ENCODE measurements at regions of chr19 and their contacts with region 1.

Region 1: GRCh38 chr19:36054119-36054732 is at the start of gene THAP8:
- DNase-seq: peak; percentile 96 to 100 (median 100)
- ATAC-seq: peak; percentile 91
- H3K4me3 ChIP-seq: peak within 1 kb of the TSS; percentile 84
- H3K4me3 Mint-ChIP-seq: peak within 1 kb of the TSS; percentile 91 to 100 (median 99)
- H3K27ac ChIP-seq: peak within 1 kb of the TSS; percentile 83
- H3K27ac Mint-ChIP-seq: peak within 1 kb of the TSS; percentile 94 to 100 (median 98)
- H3K4me1 ChIP-seq: peaks cover 8 to 10% of the 10 kb centered on the region in 2 donors
- H3K4me1 Mint-ChIP-seq: peaks cover 6 to 43% (median 34%) of the 10 kb centered on the region in 7 donors
- H3K27me3 ChIP-seq: no peaks in the 10 kb centered on the region
- H3K27me3 Mint-ChIP-seq: no peaks in the 10 kb centered on the region
- total RNA-seq, gene THAP8: 2.2 to 6.6 (median 6.1) TPM

Region 2: GRCh38 chr19:35716801-35717666 is 337.2 kb before region 1 on chr19:
- CTCF ChIA-PET with region 1: no interaction called
- POLR2A ChIA-PET with region 1: interaction called, 4 read pairs
- intact Hi-C with region 1: loop called (anchors 1 kb)
- DNase-seq: peak; percentile 64 to 99 (median 98)
- ATAC-seq: peak; percentile 92
- H3K4me3 ChIP-seq: peak overlapping the region; percentile 84
- H3K4me3 Mint-ChIP-seq: peak overlapping the region; percentile 88 to 99 (median 96)
- H3K27ac ChIP-seq: peak overlapping the region; percentile 80
- H3K27ac Mint-ChIP-seq: peak overlapping the region; percentile 22 to 98 (median 92)
- H3K4me1 ChIP-seq: peaks cover 37 to 54% of the 10 kb centered on the region in 2 donors
- H3K4me1 Mint-ChIP-seq: peaks cover 40 to 63% (median 57%) of the 10 kb centered on the region in 7 donors
- H3K27me3 ChIP-seq: no peaks in the 10 kb centered on the region
- H3K27me3 Mint-ChIP-seq: no peaks in the 10 kb centered on the region

Region 3: GRCh38 chr19:35882114-35882832 is 172.0 kb before region 1 on chr19:
- CTCF ChIA-PET with region 1: no interaction called
- POLR2A ChIA-PET with region 1: no interaction called
- intact Hi-C with region 1: loop called in 1 of 2 experiments (anchors 5 kb)
- DNase-seq: peak in 7 of 9 donors; percentile 53 to 75 (median 71)
- ATAC-seq: peak; percentile 66
- H3K4me3 ChIP-seq: no peak overlapping the region
- H3K4me3 Mint-ChIP-seq: no peak overlapping the region
- H3K27ac ChIP-seq: no peak overlapping the region
- H3K27ac Mint-ChIP-seq: peak overlapping the region in 4 of 9 donors; percentile 42 to 55 (median 50)
- H3K4me1 ChIP-seq: peaks cover 4 to 9% of the 10 kb centered on the region in 2 donors
- H3K4me1 Mint-ChIP-seq: peaks cover 8 to 17% (median 11%) of the 10 kb centered on the region in 7 donors
- H3K27me3 ChIP-seq: peaks cover 4 to 6% of the 10 kb centered on the region in 2 donors
- H3K27me3 Mint-ChIP-seq: peaks cover 12 to 20% (median 18%) of the 10 kb centered on the region in 5 donors

Region 4: GRCh38 chr19:35949131-35949530 is 105.1 kb before region 1 on chr19:
- CTCF ChIA-PET with region 1: interaction called, 4 read pairs
- POLR2A ChIA-PET with region 1: interaction called, 3 read pairs
- intact Hi-C with region 1: loop called in 1 of 2 experiments (anchors 1 kb)
- DNase-seq: no peak
- ATAC-seq: no peak
- H3K4me3 ChIP-seq: no peak overlapping the region
- H3K4me3 Mint-ChIP-seq: peak overlapping the region in 4 of 10 donors; percentile 15 to 76 (median 32)
- H3K27ac ChIP-seq: no peak overlapping the region
- H3K27ac Mint-ChIP-seq: peak overlapping the region; percentile 33 to 96 (median 79)
- H3K4me1 ChIP-seq: peaks cover 21 to 41% of the 10 kb centered on the region in 2 donors
- H3K4me1 Mint-ChIP-seq: peaks cover 38 to 75% (median 60%) of the 10 kb centered on the region in 7 donors
- H3K27me3 ChIP-seq: no peaks in the 10 kb centered on the region
- H3K27me3 Mint-ChIP-seq: no peaks in the 10 kb centered on the region

Region 5: DNA sequence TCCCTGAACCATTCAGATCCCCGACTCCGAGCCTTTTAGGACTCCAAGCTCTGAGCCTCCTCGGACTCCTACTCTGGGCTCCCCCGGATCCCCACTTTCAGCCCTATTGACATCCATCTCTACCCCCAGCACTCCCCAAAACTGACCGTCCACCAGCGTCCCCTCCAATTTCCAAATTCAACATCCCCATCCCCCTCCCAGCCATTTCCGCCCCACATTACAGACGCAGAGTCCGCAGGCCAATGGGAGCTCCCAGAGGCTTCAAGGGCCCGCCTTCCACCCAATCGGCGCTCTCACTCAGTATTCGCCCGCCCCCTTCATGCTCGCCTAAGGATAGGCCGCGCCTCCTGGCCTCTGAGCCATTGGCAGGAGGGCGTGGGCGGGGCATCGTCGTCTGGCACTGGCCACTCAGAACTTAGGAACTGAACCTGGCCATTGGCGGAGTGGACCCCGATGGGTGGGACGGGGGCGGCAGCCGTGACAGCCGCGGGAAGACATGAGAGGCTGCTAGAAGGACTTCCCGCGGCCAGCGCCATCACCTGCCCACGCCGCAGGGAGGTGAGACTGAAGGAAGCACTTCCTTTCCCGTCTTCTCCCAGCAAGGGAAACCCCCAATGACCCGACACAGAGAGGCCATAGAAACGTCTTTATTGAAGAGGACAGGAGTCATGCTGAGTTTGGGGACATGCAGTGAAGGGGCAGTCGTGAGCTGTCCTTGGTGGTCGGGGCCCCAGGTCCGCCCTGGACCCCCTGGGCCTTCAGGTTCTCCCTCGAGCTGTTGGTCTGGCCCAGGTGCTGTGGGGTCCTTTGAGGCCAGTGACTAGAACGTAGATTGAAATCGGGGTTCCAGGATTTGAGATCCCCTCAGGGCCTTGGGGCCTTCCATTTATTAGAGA is 39.9 kb before region 1 on chr19 and contains the start of gene ALKBH6:
- CTCF ChIA-PET with region 1: no interaction called
- POLR2A ChIA-PET with region 1: interaction called, 12 read pairs
- intact Hi-C with region 1: loop called (anchors 1 kb)
- DNase-seq: peak; percentile 94 to 98 (median 97)
- ATAC-seq: peak; percentile 100
- H3K4me3 ChIP-seq: peak within 1 kb of the TSS; percentile 93
- H3K4me3 Mint-ChIP-seq: peak within 1 kb of the TSS; percentile 92 to 99 (median 95)
- H3K27ac ChIP-seq: peak within 1 kb of the TSS; percentile 86
- H3K27ac Mint-ChIP-seq: peak within 1 kb of the TSS; percentile 88 to 99 (median 94)
- H3K4me1 ChIP-seq: peaks cover 12 to 18% of the 10 kb centered on the region in 2 donors
- H3K4me1 Mint-ChIP-seq: peaks cover 36 to 53% (median 46%) of the 10 kb centered on the region in 7 donors
- H3K27me3 ChIP-seq: no peaks in the 10 kb centered on the region
- H3K27me3 Mint-ChIP-seq: no peaks in the 10 kb centered on the region
- total RNA-seq, gene ALKBH6: 32.6 to 60.6 (median 49.3) TPM

Region 6: GRCh38 chr19:36030264-36031148 is 23.7 kb before region 1 on chr19:
- CTCF ChIA-PET with region 1: no interaction called
- POLR2A ChIA-PET with region 1: no interaction called
- intact Hi-C with region 1: no loop called
- DNase-seq: no peak
- ATAC-seq: no peak
- H3K4me3 ChIP-seq: no peak overlapping the region
- H3K4me3 Mint-ChIP-seq: no peak overlapping the region
- H3K27ac ChIP-seq: no peak overlapping the region
- H3K27ac Mint-ChIP-seq: peak overlapping the region in 1 of 9 donors; percentile 83
- H3K4me1 ChIP-seq: peaks cover 4% of the 10 kb centered on the region in 2 donors
- H3K4me1 Mint-ChIP-seq: peaks cover 10 to 31% (median 24%) of the 10 kb centered on the region in 7 donors
- H3K27me3 ChIP-seq: no peaks in the 10 kb centered on the region
- H3K27me3 Mint-ChIP-seq: peaks cover 0 to 4% (median 0%) of the 10 kb centered on the region in 5 donors

Region 7: GRCh38 chr19:36139473-36140303 is 85.5 kb after region 1 on chr19 and contains the start of gene CAPNS1:
- CTCF ChIA-PET with region 1: no interaction called
- POLR2A ChIA-PET with region 1: interaction called, 4 read pairs
- intact Hi-C with region 1: loop called (anchors 1 kb)
- DNase-seq: peak; percentile 82 to 95 (median 86)
- ATAC-seq: peak; percentile 83
- H3K4me3 ChIP-seq: peak within 1 kb of the TSS; percentile 99
- H3K4me3 Mint-ChIP-seq: peak within 1 kb of the TSS; percentile 91 to 98 (median 95)
- H3K27ac ChIP-seq: peak within 1 kb of the TSS; percentile 87
- H3K27ac Mint-ChIP-seq: peak within 1 kb of the TSS; percentile 85 to 97 (median 91)
- H3K4me1 ChIP-seq: peaks cover 6 to 9% of the 10 kb centered on the region in 2 donors
- H3K4me1 Mint-ChIP-seq: peaks cover 10 to 25% (median 15%) of the 10 kb centered on the region in 7 donors
- H3K27me3 ChIP-seq: no peaks in the 10 kb centered on the region
- H3K27me3 Mint-ChIP-seq: no peaks in the 10 kb centered on the region
- total RNA-seq, gene CAPNS1: 197 to 473 (median 207) TPM

Region 8: GRCh38 chr19:37779127-37780005 is 1725.1 kb after region 1 on chr19 and contains the start of gene ZNF573:
- CTCF ChIA-PET with region 1: no interaction called
- POLR2A ChIA-PET with region 1: no interaction called
- intact Hi-C with region 1: loop called in 1 of 2 experiments (anchors 1 kb)
- DNase-seq: peak; percentile 62 to 99 (median 94)
- ATAC-seq: peak; percentile 94
- H3K4me3 ChIP-seq: peak within 1 kb of the TSS; percentile 82
- H3K4me3 Mint-ChIP-seq: peak within 1 kb of the TSS; percentile 91 to 98 (median 96)
- H3K27ac ChIP-seq: peak within 1 kb of the TSS; percentile 99
- H3K27ac Mint-ChIP-seq: peak within 1 kb of the TSS; percentile 89 to 100 (median 98)
- H3K4me1 ChIP-seq: peaks cover 6% of the 10 kb centered on the region in 2 donors
- H3K4me1 Mint-ChIP-seq: peaks cover 9 to 53% (median 48%) of the 10 kb centered on the region in 7 donors
- H3K27me3 ChIP-seq: no peaks in the 10 kb centered on the region
- H3K27me3 Mint-ChIP-seq: no peaks in the 10 kb centered on the region
- total RNA-seq, gene ZNF573: 5.9 to 43.8 (median 16.6) TPM

Measured in naive thymus-derived CD4-positive, alpha-beta T cell (primary cell).